ENCODE measurements at regions of chr2 and their contacts with region 1.

Region 1: GRCh38 chr2:106085181-106085940 is 108.7 kb downstream of the UXS1 start:
- DNase-seq: no peak
- ATAC-seq: peak; percentile 89
- H3K4me3 ChIP-seq: no peak overlapping the region
- H3K27ac ChIP-seq: no peak overlapping the region
- H3K4me1 ChIP-seq: no peaks in the 10 kb centered on the region
- H3K27me3 ChIP-seq: no peaks in the 10 kb centered on the region
- CTCF ChIP-seq: peak; percentile 34 to 46 (median 42); a peak in 4 of 6 replicates
- EP300 ChIP-seq: no peak
- POLR2A ChIP-seq: no peak
- RAD21 ChIP-seq: peak; percentile 52; the same call in 1 of the 2 replicates

Region 2: DNA sequence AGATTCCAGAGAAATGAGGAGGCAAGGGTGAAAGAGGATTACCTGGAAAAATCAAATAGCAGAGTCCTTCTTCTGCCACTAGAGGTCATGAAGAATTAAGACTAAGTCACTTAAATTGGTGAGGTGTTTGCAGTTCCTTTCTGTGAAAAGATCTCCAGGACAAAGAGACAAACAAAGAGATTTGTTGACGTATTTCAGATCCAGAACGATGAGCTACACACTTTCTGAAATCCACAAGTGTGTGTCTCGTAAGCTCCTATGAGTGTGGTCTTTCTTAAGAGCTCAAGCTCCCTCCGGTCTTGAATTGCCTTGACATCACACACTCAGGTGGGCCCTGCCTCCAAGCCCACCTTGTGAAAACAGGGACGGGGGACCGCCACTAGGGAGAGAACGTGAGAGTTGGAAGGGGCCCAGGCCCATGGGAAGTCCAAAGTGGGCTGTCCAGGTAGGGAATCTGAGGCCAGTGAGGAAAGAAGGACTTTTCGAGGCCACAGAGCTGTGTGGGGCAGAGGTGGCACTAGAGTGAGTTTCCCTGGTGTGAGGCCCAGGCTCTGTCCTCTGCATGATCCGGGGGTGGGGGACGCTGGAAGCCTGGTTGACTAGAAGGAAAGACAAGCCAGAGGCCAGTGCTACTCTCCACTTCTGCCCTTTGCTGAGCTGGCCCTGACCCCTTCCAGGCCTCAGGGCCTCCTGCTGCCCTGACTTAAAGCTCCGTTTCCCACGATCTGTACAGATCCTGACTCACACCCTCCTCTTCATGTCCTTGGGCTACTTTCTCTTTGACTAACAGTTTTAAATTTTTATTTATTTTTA is 508.7 kb before region 1 on chr2:
- CTCF ChIA-PET with region 1: interaction called, 9 read pairs
- POLR2A ChIA-PET with region 1: no interaction called
- RAD21 ChIA-PET with region 1: interaction called, 3 read pairs
- SMC1A ChIA-PET with region 1: interaction called, 14 read pairs
- in situ Hi-C with region 1: loop called (anchors 5 kb)
- intact Hi-C with region 1: loop called (anchors 2 kb)
- DNase-seq: no peak
- ATAC-seq: peak; percentile 65
- H3K4me3 ChIP-seq: no peak overlapping the region
- H3K27ac ChIP-seq: no peak overlapping the region
- H3K4me1 ChIP-seq: no peaks in the 10 kb centered on the region
- H3K27me3 ChIP-seq: no peaks in the 10 kb centered on the region; a peak in 1 of 4 replicates
- CTCF ChIP-seq: peak; percentile 48 to 56 (median 49); a peak in 5 of 6 replicates
- EP300 ChIP-seq: no peak
- POLR2A ChIP-seq: no peak
- RAD21 ChIP-seq: peak; percentile 77

Region 3: GRCh38 chr2:106685180-106685900 is 600.0 kb after region 1 on chr2:
- CTCF ChIA-PET with region 1: no interaction called
- POLR2A ChIA-PET with region 1: no interaction called
- RAD21 ChIA-PET with region 1: no interaction called
- SMC1A ChIA-PET with region 1: no interaction called
- in situ Hi-C with region 1: no loop called
- intact Hi-C with region 1: no loop called
- DNase-seq: no peak
- ATAC-seq: no peak
- H3K4me3 ChIP-seq: no peak overlapping the region
- H3K27ac ChIP-seq: no peak overlapping the region
- H3K4me1 ChIP-seq: no peaks in the 10 kb centered on the region
- H3K27me3 ChIP-seq: no peaks in the 10 kb centered on the region
- CTCF ChIP-seq: no peak
- EP300 ChIP-seq: no peak
- POLR2A ChIP-seq: no peak
- RAD21 ChIP-seq: no peak